ENCODE measurements at regions of chr9 and their contacts with region 1.

Region 1: DNA sequence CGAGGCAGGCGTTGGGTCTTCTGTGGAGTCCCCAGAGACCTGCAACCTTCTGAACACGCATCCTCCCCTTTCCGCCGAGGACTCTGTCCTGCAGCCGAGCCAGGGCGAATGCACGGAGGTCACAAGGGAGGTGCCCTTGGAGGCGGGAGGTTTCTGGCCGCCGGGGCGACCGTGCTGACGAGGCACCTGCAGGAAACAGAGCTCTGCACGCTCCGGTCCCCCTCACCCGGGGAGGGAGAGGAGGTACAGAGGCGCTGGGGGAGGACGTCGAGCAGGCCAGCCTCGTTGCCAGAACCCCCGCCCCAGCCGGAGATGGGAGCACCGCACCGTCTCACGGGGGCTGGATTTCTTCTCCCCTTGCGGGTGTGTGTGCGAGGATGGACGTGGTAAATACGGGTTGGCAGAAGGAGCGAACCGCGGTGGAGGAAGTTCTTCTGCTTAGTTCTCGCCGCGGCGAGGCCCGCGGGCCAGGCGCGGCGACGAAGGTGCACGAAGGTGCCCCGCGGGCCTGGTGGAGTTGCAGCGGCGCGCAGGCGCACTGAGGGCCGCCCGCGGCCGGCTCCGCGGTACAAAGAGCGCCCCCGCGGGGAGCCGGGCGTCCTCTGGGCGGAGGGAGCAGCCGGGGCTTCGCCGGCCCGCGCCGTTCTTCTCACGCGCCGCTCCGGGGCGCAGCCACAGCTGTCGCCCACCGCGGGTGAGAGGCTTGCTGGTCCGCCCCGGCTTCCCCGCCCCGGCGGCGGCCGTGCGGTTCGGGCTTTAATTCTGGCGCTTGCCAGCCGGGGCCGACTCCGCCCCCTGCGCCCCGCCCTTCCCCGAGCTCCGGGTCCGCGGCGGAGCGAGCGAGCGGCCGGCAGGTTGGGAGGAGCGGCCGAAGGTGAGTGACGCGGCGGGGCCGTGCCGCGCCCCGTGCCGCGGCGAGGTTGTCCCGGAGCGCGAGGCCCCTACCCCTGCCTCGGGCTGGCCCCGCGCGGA is 289.5 kb downstream of the DOCK8 start:
- DNase-seq: peak; percentile 72
- H3K4me3 Mint-ChIP-seq: peak within 1 kb of the TSS; percentile 79
- H3K27ac Mint-ChIP-seq: peak within 1 kb of the TSS; percentile 50
- H3K4me1 Mint-ChIP-seq: peaks cover 7% of the 10 kb centered on the region
- H3K27me3 Mint-ChIP-seq: peaks cover 34% of the 10 kb centered on the region

Region 2: GRCh38 chr9:469672-470551 is 34.3 kb before region 1 on chr9:
- intact Hi-C with region 1: loop called (anchors 2 kb)
- DNase-seq: peak; percentile 86
- H3K4me3 Mint-ChIP-seq: peak overlapping the region; percentile 90
- H3K27ac Mint-ChIP-seq: peak overlapping the region; percentile 86
- H3K4me1 Mint-ChIP-seq: peaks cover 18% of the 10 kb centered on the region
- H3K27me3 Mint-ChIP-seq: no peaks in the 10 kb centered on the region

Region 3: DNA sequence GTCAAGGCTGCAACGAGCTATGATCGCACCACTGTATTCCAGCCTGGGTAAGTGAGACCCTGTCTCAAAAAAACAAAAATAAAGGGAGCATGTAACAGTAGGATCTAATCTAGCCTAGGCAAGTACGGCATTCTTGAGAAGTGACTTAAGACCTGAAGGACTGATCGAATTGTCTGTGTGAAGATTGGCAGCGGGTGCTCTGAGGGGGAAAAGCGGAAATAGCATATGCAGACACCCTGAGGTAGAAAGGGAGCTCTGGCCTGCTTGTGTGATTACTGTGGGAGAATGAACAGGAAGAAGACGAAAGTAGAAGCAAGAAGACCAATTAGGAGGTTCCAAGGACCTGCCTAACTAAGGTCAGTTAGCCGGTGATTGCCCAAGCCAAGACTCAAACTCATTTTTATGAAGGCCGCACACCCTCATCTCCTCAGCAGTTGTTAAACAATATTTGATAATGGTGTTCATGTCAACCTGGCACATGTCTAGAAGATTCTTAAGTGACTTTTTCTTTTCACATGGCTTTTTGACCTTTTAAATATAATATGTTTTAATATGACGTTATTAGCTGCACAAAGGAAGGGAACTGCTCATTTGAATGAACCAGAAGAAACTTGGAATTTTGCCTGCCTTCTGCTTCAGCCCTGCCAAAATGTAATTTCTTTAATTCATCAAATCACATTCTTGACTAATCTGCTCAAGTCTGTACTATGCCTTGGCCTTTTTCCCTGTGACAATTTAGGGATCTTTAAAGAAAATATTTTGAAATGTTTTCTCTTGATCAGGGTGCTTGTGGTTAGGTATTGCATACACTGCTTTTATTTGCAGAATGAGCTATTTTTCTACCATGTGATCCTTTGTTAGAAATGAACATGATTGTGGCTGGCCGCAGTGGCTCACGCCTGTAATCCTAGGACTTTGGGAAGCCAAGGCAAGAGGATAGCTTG is 48.1 kb after region 1 on chr9:
- intact Hi-C with region 1: no loop called
- DNase-seq: no peak
- H3K4me3 Mint-ChIP-seq: no peak overlapping the region
- H3K27ac Mint-ChIP-seq: no peak overlapping the region
- H3K4me1 Mint-ChIP-seq: peaks cover 5% of the 10 kb centered on the region
- H3K27me3 Mint-ChIP-seq: peaks cover 10% of the 10 kb centered on the region

Measured in activated T-helper 2 cell treated with anti-CD3 and anti-CD28 coated beads, Interferon-gamma antibody, Interleukin-2, Interleukin-4, amounts not matched to agents 10 μg/mL and 5 μg/mL and 100 μg/mL, durations not matched to agents 14 hours and 24 hours and 36 hours (primary cell).